HEK293 (cell line): ENCODE measurements at regions of chr2 and their contacts with region 1.

Region 1: DNA sequence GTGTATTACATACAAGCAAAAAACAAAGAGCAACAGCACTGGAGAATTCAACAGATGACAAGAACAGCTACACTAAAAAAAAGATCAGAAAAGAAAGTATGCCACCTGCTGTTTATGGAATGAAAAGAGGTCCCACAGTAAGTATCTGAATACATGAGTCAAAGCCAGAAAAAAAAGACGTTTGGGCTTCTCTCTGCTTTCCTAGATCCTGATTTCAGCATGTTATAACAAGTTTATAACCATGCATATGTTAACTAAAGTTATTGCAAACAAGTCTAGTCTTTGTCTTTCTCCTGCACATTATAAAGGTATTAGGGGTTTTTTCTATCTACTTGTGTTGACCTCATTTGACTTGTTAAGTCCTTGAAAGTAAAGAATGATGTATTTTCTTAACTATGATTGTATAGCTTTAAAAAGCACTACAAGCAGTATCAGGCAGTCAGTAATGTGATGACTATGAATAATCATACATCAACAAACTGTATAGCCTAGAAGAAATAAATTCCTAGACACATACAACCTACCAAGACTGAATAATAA is 108.5 kb upstream of the COL5A2 start:
- H3K4me3 ChIP-seq: no peak overlapping the region
- H3K27ac ChIP-seq: no peak overlapping the region
- H3K4me1 ChIP-seq: no peaks in the 10 kb centered on the region
- CTCF ChIP-seq: peak; percentile 72

Region 2: GRCh38 chr2:187509667-187510417 is 1778.2 kb before region 1 on chr2:
- CTCF ChIA-PET with region 1: no interaction called
- POLR2A ChIA-PET with region 1: no interaction called
- H3K4me3 ChIP-seq: no peak overlapping the region
- H3K27ac ChIP-seq: no peak overlapping the region
- H3K4me1 ChIP-seq: no peaks in the 10 kb centered on the region
- CTCF ChIP-seq: no peak

Region 3: DNA sequence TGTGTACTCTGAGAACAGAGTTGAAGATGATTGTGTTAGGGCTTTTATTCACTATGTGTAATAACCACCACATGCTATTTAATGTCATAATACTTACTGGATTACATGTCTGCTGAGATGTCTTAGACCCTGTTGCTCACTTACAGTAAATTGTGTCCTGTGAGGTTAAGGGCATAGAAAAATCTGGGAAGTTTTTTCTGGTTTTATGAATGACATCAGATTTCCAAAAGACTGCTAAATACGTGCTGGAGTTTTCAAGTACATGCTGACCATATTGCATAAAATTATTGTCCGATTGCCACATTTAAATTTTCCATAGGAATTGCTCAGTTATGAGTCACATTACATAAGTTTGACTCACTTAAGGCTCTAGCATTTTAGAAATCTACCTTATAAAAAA is 11.8 kb before region 1 on chr2:
- CTCF ChIA-PET with region 1: interaction called, 11 read pairs
- POLR2A ChIA-PET with region 1: no interaction called
- H3K4me3 ChIP-seq: no peak overlapping the region
- H3K27ac ChIP-seq: no peak overlapping the region
- H3K4me1 ChIP-seq: no peaks in the 10 kb centered on the region
- CTCF ChIP-seq: no peak

Region 4: GRCh38 chr2:189347540-189347939 is 59.5 kb after region 1 on chr2:
- CTCF ChIA-PET with region 1: no interaction called
- POLR2A ChIA-PET with region 1: no interaction called
- H3K4me3 ChIP-seq: no peak overlapping the region
- H3K27ac ChIP-seq: no peak overlapping the region
- H3K4me1 ChIP-seq: no peaks in the 10 kb centered on the region
- CTCF ChIP-seq: no peak